ENCODE measurements at regions of chr17 and their contacts with region 1.

Region 1: GRCh38 chr17:58679263-58680037 is 12.4 kb downstream of the TEX14 start:
- DNase-seq: peak; percentile 45 to 99
- H3K4me3 ChIP-seq: peak overlapping the region; percentile 25; the same call in 1 of the 2 replicates
- H3K27ac ChIP-seq: peak overlapping the region; percentile 48
- H3K4me1 ChIP-seq: peaks cover 22% of the 10 kb centered on the region
- H3K27me3 ChIP-seq: no peaks in the 10 kb centered on the region
- CTCF ChIP-seq: no peak; the same call in 1 of the 2 replicates

Region 2: DNA sequence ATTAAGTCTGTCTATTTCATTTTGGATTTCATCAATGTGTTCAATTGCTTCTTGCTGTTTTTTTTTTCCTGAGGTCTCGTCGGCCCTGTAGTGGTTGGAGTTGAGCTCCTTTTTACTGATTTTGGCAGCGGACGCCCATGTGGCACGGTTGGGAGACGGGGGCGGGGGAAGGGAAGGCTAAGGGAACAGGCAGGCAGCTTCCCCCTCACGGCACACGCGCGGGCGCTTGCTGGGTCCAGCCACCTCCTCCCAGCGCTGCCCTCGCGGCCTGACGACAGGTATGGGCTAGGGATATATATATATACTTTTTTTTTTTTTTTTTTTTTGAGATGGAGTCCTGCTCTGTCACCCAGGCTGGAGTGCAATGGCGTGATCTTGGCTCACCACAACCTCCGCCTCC is 202.6 kb before region 1 on chr17:
- CTCF ChIA-PET with region 1: no interaction called
- POLR2A ChIA-PET with region 1: no interaction called
- intact Hi-C with region 1: no loop called
- DNase-seq: no peak
- H3K4me3 ChIP-seq: no peak overlapping the region
- H3K27ac ChIP-seq: no peak overlapping the region
- H3K4me1 ChIP-seq: no peaks in the 10 kb centered on the region
- H3K27me3 ChIP-seq: no peaks in the 10 kb centered on the region
- CTCF ChIP-seq: no peak

Region 3: GRCh38 chr17:58577642-58578091 is 101.8 kb before region 1 on chr17:
- CTCF ChIA-PET with region 1: no interaction called
- POLR2A ChIA-PET with region 1: no interaction called
- intact Hi-C with region 1: no loop called
- DNase-seq: peak; percentile 24 to 44
- H3K4me3 ChIP-seq: no peak overlapping the region
- H3K27ac ChIP-seq: no peak overlapping the region
- H3K4me1 ChIP-seq: peaks cover 15% of the 10 kb centered on the region
- H3K27me3 ChIP-seq: no peaks in the 10 kb centered on the region
- CTCF ChIP-seq: peak; percentile 83

Region 4: GRCh38 chr17:58666858-58667619 is 12.4 kb before region 1 on chr17:
- CTCF ChIA-PET with region 1: interaction called, 12 read pairs
- POLR2A ChIA-PET with region 1: interaction called, 3 read pairs
- intact Hi-C with region 1: no loop called
- DNase-seq: no peak
- H3K4me3 ChIP-seq: no peak overlapping the region
- H3K27ac ChIP-seq: peak overlapping the region; percentile 75
- H3K4me1 ChIP-seq: peaks cover 44% of the 10 kb centered on the region
- H3K27me3 ChIP-seq: no peaks in the 10 kb centered on the region
- CTCF ChIP-seq: no peak

Region 5: GRCh38 chr17:59139939-59140338 is 460.5 kb after region 1 on chr17:
- CTCF ChIA-PET with region 1: no interaction called
- POLR2A ChIA-PET with region 1: no interaction called
- intact Hi-C with region 1: no loop called
- DNase-seq: no peak
- H3K4me3 ChIP-seq: no peak overlapping the region
- H3K27ac ChIP-seq: no peak overlapping the region
- H3K4me1 ChIP-seq: no peaks in the 10 kb centered on the region
- H3K27me3 ChIP-seq: no peaks in the 10 kb centered on the region
- CTCF ChIP-seq: no peak

Measured in PC-9 (cell line).